B cell (primary cell): ENCODE measurements at regions of chr7 and their contacts with region 1.

Region 1: GRCh38 chr7:111098011-111098925 is 7.3 kb downstream of the LRRN3 start:
- DNase-seq: peak; percentile 57
- ATAC-seq: peak; percentile 63
- H3K4me3 ChIP-seq: no peak overlapping the region
- H3K4me3 Mint-ChIP-seq: no peak overlapping the region
- H3K27ac ChIP-seq: no peak overlapping the region
- H3K27ac Mint-ChIP-seq: no peak overlapping the region
- H3K4me1 ChIP-seq: peaks cover 0 to 1% of the 10 kb centered on the region in 2 donors
- H3K4me1 Mint-ChIP-seq: peaks cover 9% of the 10 kb centered on the region
- H3K27me3 ChIP-seq: no peaks in the 10 kb centered on the region
- H3K27me3 Mint-ChIP-seq: no peaks in the 10 kb centered on the region
- CTCF ChIP-seq: peak; percentile 70

Region 2: DNA sequence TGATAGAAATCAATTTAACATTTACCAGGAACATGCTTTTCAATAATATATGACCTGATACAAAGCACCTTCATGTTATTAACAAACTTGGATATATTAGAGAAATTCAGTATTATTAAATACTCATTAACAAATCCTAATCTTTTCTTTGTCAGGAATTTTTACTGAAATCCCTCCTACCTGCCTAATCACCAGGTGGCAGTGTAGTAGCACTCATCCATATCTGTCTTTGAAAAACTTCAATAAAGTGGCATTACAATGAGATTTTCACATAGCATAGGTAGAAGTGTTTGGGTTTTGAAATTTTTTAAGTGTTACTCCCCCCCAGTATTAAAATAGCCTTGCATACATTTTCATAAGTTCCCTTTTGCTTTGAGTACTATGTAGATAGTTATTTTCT is 1253.9 kb before region 1 on chr7:
- CTCF ChIA-PET with region 1: no interaction called
- POLR2A ChIA-PET with region 1: no interaction called
- intact Hi-C with region 1: loop called (anchors 10 kb)
- DNase-seq: no peak
- ATAC-seq: no peak
- H3K4me3 ChIP-seq: no peak overlapping the region
- H3K4me3 Mint-ChIP-seq: no peak overlapping the region
- H3K27ac ChIP-seq: no peak overlapping the region
- H3K27ac Mint-ChIP-seq: no peak overlapping the region
- H3K4me1 ChIP-seq: no peaks in the 10 kb centered on the region
- H3K4me1 Mint-ChIP-seq: no peaks in the 10 kb centered on the region
- H3K27me3 ChIP-seq: no peaks in the 10 kb centered on the region
- H3K27me3 Mint-ChIP-seq: no peaks in the 10 kb centered on the region
- CTCF ChIP-seq: no peak

Region 3: DNA sequence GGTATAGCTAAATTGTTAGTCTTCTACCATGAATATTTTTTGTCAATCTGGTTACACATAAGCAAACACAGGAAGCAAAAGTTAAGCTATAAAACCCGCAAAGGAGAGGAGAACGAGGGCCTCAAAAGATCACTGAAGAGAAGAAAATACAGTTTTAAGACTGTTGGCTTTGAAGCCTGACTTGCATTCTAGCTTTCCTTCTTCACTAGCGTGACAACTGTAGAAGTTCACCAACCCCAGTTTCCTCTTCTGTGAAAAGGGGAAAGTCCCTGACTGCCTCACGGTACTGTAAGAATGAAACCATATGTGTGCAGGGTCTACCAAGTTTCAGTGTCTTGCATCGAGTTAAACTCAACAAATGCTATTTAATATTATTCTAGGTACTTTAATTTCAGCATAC is 14.9 kb before region 1 on chr7:
- CTCF ChIA-PET with region 1: interaction called, 17 read pairs
- POLR2A ChIA-PET with region 1: no interaction called
- intact Hi-C with region 1: no loop called
- DNase-seq: peak; percentile 74
- ATAC-seq: peak; percentile 98
- H3K4me3 ChIP-seq: peak overlapping the region in 1 of 5 experiments; percentile 8
- H3K4me3 Mint-ChIP-seq: peak overlapping the region; percentile 61
- H3K27ac ChIP-seq: peak overlapping the region in 1 of 2 donors; percentile 48
- H3K27ac Mint-ChIP-seq: peak overlapping the region; percentile 88
- H3K4me1 ChIP-seq: peaks cover 12 to 31% of the 10 kb centered on the region in 2 donors
- H3K4me1 Mint-ChIP-seq: peaks cover 38% of the 10 kb centered on the region
- H3K27me3 ChIP-seq: no peaks in the 10 kb centered on the region
- H3K27me3 Mint-ChIP-seq: no peaks in the 10 kb centered on the region
- CTCF ChIP-seq: no peak